Colonic mucosa (tissue), 4 donors: ENCODE measurements at regions of chr1 and their contacts with region 1.

Region 1: GRCh38 chr1:61453111-61453961 is 271.6 kb downstream of the TM2D1 start:
- DNase-seq: peak; percentile 90
- H3K4me3 ChIP-seq: no peak overlapping the region
- H3K27ac ChIP-seq: peak overlapping the region; percentile 4
- H3K4me1 ChIP-seq: peaks cover 13% of the 10 kb centered on the region
- H3K27me3 ChIP-seq: no peaks in the 10 kb centered on the region
- CTCF ChIP-seq: peak; percentile 75

Region 2: GRCh38 chr1:60989749-60990713 is 463.3 kb before region 1 on chr1:
- intact Hi-C with region 1: loop called (anchors 10 kb)
- DNase-seq: no peak
- H3K4me3 ChIP-seq: no peak overlapping the region
- H3K27ac ChIP-seq: no peak overlapping the region
- H3K4me1 ChIP-seq: no peaks in the 10 kb centered on the region
- H3K27me3 ChIP-seq: no peaks in the 10 kb centered on the region
- CTCF ChIP-seq: no peak

Region 3: GRCh38 chr1:61210435-61211154 is 242.7 kb before region 1 on chr1:
- intact Hi-C with region 1: no loop called
- DNase-seq: no peak
- H3K4me3 ChIP-seq: no peak overlapping the region
- H3K27ac ChIP-seq: no peak overlapping the region
- H3K4me1 ChIP-seq: no peaks in the 10 kb centered on the region
- H3K27me3 ChIP-seq: no peaks in the 10 kb centered on the region
- CTCF ChIP-seq: no peak

Region 4: DNA sequence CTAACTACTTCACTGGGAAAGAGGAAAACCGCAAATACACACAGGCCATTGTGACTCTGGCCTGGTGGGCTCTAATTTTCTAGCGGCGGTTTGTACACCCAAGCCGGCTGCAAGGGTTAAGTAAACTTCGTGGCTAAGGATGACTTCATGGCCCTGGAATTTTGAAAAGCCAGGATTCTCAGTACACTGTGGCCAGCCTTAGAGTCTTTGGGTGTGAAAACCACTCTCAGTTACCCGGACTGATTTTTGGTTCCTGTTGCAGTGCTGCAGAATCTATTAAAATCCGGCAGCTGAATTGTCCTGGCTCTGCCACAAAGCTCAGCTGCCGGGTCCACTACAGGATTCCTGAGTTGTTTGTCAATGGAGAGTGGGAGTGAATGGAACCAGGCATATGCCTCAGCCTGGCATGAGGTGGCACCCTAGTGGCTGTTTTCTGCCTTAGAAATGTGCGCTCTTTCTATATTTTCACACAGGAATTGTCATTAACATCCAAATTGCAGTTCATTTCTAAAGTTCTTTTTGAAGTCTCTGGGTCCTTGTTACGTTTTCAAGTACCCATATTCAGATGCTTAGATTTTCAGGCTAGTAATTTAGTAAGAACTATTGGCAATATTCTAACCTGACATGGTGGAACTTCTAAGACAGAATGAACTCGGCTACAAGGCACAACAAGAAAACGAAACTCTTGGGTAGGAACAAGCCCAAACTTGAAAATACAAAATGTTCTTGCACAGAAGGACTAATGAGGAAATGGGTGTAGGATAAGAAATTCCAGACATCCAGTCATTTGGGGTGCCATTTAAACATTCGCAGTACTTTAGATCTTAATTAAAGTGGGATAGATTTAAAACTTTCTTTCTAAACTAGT is 115.1 kb before region 1 on chr1:
- intact Hi-C with region 1: loop called (anchors 10 kb)
- DNase-seq: peak; percentile 64
- H3K4me3 ChIP-seq: no peak overlapping the region
- H3K27ac ChIP-seq: peak overlapping the region; percentile 29
- H3K4me1 ChIP-seq: no peaks in the 10 kb centered on the region
- H3K27me3 ChIP-seq: no peaks in the 10 kb centered on the region
- CTCF ChIP-seq: peak; percentile 44

Region 5: DNA sequence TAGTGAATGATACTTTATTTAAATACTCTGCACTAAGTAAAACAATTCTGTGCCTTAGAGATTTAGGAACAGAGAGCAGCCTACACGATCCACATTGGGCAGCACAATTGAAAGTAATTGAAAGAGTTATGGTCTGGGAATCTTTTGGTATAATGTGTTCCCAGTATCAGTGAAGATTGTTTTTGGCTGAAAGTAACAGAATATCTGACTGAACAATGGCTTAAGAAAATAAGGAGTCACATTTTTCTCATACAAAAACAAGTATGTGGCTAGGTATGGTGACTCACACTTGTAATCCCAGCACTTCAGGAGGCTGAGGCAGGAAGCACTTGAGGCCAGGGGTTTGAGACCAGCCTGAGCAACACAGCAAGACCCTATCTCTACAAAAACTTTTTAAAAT is 64.8 kb before region 1 on chr1:
- intact Hi-C with region 1: loop called (anchors 5 kb)
- DNase-seq: no peak
- H3K4me3 ChIP-seq: no peak overlapping the region
- H3K27ac ChIP-seq: no peak overlapping the region
- H3K4me1 ChIP-seq: no peaks in the 10 kb centered on the region
- H3K27me3 ChIP-seq: no peaks in the 10 kb centered on the region
- CTCF ChIP-seq: no peak

Region 6: GRCh38 chr1:61552630-61553305 is 99.4 kb after region 1 on chr1:
- intact Hi-C with region 1: no loop called
- DNase-seq: no peak
- H3K4me3 ChIP-seq: no peak overlapping the region
- H3K27ac ChIP-seq: no peak overlapping the region
- H3K4me1 ChIP-seq: no peaks in the 10 kb centered on the region
- H3K27me3 ChIP-seq: no peaks in the 10 kb centered on the region
- CTCF ChIP-seq: no peak